Activated naive CD4-positive, alpha-beta T cell treated with anti-CD3 and anti-CD28 coated beads for 36 hours (primary cell): ENCODE measurements at regions of chr11 and their contacts with region 1.

Region 1: DNA sequence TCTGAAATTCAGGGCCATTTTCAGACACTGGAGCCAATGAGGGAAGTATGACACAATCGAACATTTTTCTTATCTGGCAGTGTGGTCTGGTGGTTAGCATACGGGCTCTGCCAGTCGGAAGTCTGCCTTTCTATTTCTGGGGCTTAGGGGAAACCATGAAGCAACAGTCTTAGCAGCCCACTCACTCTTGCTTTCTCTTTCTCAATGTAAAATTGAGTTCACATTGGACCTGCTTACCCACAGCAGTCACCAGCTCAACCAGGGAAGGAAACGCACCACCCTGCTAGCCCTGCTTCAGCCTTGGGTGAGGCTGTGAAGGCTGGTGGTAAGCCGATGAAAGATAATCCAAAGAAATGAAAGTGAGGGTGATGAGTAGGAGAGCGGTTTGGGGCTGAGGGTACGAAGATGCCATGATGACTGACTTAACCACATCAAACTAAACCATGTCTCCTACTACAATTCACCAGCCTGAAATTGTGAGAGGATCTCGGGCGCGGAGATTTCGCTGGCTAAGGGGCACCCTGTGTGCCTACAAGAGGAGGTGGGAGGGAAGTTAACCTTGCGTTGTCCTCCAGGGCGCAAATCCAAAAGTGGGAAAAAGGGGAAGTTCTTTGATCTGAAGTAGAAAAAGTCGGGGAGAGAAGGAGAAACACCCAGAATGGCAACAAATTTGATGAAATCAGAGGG is 2.0 kb upstream of the LMO2 start:
- DNase-seq: peak; percentile 87
- H3K4me3 Mint-ChIP-seq: peak overlapping the region; percentile 57
- H3K27ac Mint-ChIP-seq: peak overlapping the region; percentile 33
- H3K4me1 Mint-ChIP-seq: peaks cover 47% of the 10 kb centered on the region
- H3K27me3 Mint-ChIP-seq: peaks cover 47% of the 10 kb centered on the region

Region 2: DNA sequence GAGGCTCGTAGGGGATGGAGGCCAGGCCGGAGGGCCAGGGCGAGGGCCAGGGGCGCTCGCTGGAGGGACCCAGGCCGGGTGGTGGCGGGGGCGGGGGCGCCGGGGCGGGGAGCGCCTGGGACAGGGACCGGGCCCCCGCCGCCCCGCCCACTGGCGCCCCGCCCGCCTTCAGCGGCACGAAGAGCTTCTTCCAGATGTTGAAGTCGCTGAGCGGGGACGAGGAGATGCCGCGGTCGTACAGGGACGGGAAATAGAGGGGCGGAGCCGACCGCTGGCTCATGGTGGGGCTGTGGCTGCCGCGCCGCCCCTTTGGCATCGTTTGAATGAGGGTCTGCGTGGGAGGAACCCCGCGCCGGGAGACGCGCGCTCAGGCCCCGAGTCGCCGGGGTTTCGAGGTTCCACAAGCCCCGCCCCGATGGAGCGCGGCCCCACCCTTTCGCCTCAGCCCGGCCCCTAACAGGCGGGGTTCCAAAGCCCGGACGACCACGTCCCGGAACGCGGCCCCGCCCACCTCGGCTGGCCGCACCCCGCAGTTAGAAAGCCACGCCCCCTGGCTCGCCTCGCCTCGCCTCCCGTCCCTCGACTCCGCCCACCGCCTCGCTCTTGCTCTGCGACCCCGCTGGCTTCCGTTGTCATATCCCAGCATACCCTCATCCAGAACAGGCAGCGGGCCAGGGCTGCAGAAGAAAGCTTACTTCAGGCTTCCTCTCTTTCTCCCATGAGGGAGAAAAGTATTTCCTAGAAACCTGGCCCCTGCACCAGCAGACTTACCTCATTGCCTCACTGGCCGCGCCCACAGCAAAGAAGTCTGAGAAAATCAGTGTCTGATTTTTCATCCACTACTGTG is 193.2 kb before region 1 on chr11 and contains the start of gene C11orf91:
- CTCF ChIA-PET with region 1: no interaction called
- intact Hi-C with region 1: loop called (anchors 2 kb)
- DNase-seq: peak; percentile 94
- H3K4me3 Mint-ChIP-seq: peak within 1 kb of the TSS; percentile 85
- H3K27ac Mint-ChIP-seq: peak within 1 kb of the TSS; percentile 61
- H3K4me1 Mint-ChIP-seq: peaks cover 7% of the 10 kb centered on the region
- H3K27me3 Mint-ChIP-seq: peaks cover 8% of the 10 kb centered on the region
- total RNA-seq, gene C11orf91: not detected

Region 3: DNA sequence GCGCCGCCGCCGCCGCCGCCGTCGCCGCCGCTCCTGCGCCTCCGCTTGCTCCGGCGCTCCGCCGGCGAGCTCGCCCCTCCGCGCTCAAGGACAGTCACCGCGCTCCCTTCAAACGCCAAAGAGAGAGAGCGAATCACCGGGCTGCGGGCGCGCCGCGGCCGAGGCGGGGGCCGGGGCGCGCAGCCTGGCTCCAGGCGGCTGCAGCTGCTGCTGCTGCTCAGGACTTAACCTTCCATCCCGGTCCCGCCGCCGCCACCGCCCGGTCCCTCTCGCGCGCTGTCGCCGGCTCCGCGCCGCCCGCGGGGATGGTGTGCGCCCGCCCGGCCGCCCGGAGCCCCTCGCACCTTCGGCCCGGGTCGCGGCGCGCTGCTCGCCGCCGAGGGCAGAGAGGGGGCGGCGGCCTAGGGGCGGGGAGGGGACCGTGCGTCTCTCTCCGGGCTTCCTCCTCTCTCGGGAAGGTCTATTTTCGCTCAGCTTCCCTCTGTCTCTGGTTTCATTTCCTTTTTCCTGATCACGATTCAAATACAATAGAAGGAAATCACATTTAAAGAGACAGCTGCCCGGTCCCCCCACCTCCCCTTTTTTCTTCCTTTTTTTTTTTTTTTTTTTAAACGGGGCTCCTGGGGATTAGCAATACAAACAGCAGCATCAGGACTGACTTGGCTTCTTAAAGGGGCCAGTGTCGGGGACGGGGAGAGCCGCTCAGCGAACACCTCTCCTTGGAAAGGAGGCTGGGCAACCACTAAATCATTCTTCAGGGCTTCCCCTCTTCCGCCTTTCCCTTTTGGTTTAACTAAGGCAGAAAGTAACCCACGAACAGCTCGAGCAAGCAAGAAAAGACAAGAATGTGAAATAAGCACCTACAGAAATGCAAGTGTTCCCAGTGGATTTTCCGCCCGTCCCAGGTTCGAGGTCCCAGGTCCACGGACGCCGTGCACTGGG is 24.1 kb before region 1 on chr11:
- CTCF ChIA-PET with region 1: interaction called, 3 read pairs
- intact Hi-C with region 1: loop called (anchors 1 kb)
- DNase-seq: peak; percentile 20
- H3K4me3 Mint-ChIP-seq: peak overlapping the region; percentile 76
- H3K27ac Mint-ChIP-seq: no peak overlapping the region
- H3K4me1 Mint-ChIP-seq: peaks cover 13% of the 10 kb centered on the region
- H3K27me3 Mint-ChIP-seq: peaks cover 58% of the 10 kb centered on the region

Region 4: GRCh38 chr11:33949252-33949913 is 55.5 kb after region 1 on chr11:
- CTCF ChIA-PET with region 1: no interaction called
- intact Hi-C with region 1: no loop called
- DNase-seq: no peak
- H3K4me3 Mint-ChIP-seq: no peak overlapping the region
- H3K27ac Mint-ChIP-seq: no peak overlapping the region
- H3K4me1 Mint-ChIP-seq: no peaks in the 10 kb centered on the region
- H3K27me3 Mint-ChIP-seq: peaks cover 1% of the 10 kb centered on the region

Region 5: DNA sequence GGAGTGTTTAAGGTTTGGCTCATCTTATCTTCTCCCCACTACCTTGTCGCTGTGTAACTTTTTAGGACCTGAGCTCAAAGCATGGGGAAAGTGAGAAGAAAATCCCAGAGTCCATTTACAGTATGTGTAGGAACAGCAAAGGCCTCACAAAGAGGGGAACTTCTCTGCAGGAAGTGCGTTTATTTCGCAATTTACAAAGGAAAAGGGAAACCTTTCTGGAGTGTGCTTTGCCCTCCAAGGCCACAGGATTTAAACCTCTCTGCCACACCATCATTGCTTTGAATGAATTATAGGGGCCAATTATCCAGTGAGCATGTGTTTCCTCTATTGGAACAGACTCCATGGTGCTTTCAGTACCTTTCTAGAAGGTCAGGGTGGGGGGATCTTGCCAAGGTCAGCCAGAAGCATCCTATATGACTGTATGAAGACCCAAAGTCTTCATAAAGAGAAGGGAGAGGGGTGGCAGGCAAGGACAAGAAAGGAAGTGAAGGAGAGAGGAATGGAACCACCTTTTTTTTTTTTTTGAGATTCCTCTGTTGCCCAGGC is 66.1 kb after region 1 on chr11:
- CTCF ChIA-PET with region 1: no interaction called
- intact Hi-C with region 1: no loop called
- DNase-seq: no peak
- H3K4me3 Mint-ChIP-seq: no peak overlapping the region
- H3K27ac Mint-ChIP-seq: no peak overlapping the region
- H3K4me1 Mint-ChIP-seq: no peaks in the 10 kb centered on the region
- H3K27me3 Mint-ChIP-seq: peaks cover 9% of the 10 kb centered on the region

Region 6: GRCh38 chr11:34051349-34052035 is 157.6 kb after region 1 on chr11 and contains the start of gene CAPRIN1:
- CTCF ChIA-PET with region 1: no interaction called
- intact Hi-C with region 1: loop called (anchors 2 kb)
- DNase-seq: peak; percentile 86
- H3K4me3 Mint-ChIP-seq: peak within 1 kb of the TSS; percentile 96
- H3K27ac Mint-ChIP-seq: peak within 1 kb of the TSS; percentile 97
- H3K4me1 Mint-ChIP-seq: peaks cover 14% of the 10 kb centered on the region
- H3K27me3 Mint-ChIP-seq: no peaks in the 10 kb centered on the region
- total RNA-seq, gene CAPRIN1: 274 to 289 TPM

Region 7: DNA sequence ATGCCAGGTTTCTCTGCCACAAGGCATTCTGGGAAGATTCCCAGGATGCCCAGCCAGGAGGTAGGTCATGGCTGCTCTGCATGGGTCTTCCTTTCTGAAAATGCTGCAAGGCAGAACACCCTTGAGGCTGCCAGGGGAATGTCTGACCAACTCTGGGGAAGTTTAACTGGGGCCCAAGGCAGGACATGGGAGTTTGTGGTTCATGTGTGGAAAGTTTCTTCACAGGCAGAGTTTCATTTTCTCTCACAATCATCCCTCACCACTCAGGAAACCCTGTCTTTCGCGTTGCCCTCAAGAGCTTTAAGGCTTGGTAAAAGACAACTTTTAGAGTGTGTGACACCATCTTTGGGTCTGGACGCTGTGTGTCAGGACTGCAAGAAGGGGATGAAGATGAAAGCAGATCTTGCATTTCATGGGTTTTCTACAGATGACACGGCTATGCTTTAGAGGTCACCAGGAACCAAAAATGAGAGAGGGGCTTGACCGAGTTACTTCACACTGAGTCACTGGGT is 1378.6 kb after region 1 on chr11:
- CTCF ChIA-PET with region 1: no interaction called
- intact Hi-C with region 1: loop called (anchors 5 kb)
- DNase-seq: peak; percentile 70
- H3K4me3 Mint-ChIP-seq: peak overlapping the region; percentile 17
- H3K27ac Mint-ChIP-seq: peak overlapping the region; percentile 63
- H3K4me1 Mint-ChIP-seq: peaks cover 48% of the 10 kb centered on the region
- H3K27me3 Mint-ChIP-seq: no peaks in the 10 kb centered on the region